ENCODE measurements at regions of chr11 and their contacts with region 1.

Region 1: DNA sequence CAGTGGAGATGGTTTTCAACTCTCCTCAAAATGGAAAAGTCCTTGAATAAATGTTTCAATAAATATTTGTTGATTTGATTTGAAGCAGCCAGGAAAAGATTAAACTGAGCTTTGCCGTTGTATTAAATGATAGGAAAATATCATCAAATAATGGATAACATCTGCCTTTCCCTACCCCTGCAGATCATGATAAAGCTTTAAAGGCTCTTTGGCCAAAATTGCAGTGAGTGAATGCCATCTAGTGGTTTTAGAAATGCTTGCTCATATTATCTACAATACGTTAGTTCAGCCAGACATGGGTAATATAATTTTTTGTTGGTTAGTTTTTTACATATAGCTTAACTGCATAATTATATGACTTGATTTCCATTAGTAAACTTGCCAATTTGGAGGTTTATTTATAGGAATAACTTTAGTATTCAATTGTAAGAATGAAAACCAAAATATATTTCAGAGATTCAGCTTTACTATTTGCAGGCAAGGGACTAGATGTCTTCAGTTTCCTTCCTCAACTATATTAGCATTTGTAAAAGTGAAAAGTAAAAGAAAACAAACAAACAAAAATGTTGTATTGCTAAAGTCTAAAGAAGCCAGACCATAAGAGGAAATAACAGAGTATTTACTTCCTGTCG is 159.2 kb downstream of the MSANTD4 start:
- DNase-seq: peak; percentile 83
- ATAC-seq: peak; percentile 82
- H3K4me3 ChIP-seq: no peak overlapping the region
- H3K27ac ChIP-seq: no peak overlapping the region
- H3K4me1 ChIP-seq: no peaks in the 10 kb centered on the region
- H3K27me3 ChIP-seq: no peaks in the 10 kb centered on the region
- CTCF ChIP-seq: peak; percentile 93

Region 2: GRCh38 chr11:104164028-104164520 is 1698.8 kb before region 1 on chr11 and contains the start of gene PDGFD:
- CTCF ChIA-PET with region 1: no interaction called
- POLR2A ChIA-PET with region 1: no interaction called
- intact Hi-C with region 1: loop called (anchors 10 kb)
- DNase-seq: peak; percentile 67
- ATAC-seq: peak; percentile 90
- H3K4me3 ChIP-seq: peak within 1 kb of the TSS; percentile 65
- H3K27ac ChIP-seq: no peak within 1 kb of the TSS
- H3K4me1 ChIP-seq: no peaks in the 10 kb centered on the region
- H3K27me3 ChIP-seq: no peaks in the 10 kb centered on the region
- CTCF ChIP-seq: peak; percentile 46
- total RNA-seq, gene PDGFD: 3.7 and 5.0 TPM in 2 replicates

Region 3: GRCh38 chr11:104609311-104610085 is 1253.4 kb before region 1 on chr11:
- CTCF ChIA-PET with region 1: no interaction called
- POLR2A ChIA-PET with region 1: no interaction called
- intact Hi-C with region 1: loop called (anchors 2 kb)
- DNase-seq: peak; percentile 75
- ATAC-seq: peak; percentile 98
- H3K4me3 ChIP-seq: no peak overlapping the region
- H3K27ac ChIP-seq: no peak overlapping the region
- H3K4me1 ChIP-seq: no peaks in the 10 kb centered on the region
- H3K27me3 ChIP-seq: no peaks in the 10 kb centered on the region
- CTCF ChIP-seq: peak; percentile 93

Region 4: DNA sequence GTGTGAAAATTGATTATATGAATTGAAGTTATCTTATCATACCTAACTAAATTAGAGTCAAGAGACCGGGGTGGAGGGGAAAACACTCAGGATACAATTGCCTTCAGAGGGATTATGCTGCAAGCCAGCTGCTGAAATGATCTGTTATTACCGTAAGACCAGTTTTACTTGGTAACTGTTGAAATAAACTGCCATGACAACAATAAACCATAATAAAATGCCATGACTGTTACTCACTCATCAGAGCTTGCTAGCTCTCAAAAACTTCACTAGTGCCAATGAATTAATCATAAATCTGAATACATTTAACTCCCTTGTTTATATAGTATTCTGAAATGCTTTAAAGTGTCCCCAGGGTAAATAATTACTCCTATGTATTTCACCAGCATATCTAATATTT is 1032.8 kb before region 1 on chr11:
- CTCF ChIA-PET with region 1: no interaction called
- POLR2A ChIA-PET with region 1: no interaction called
- intact Hi-C with region 1: loop called (anchors 10 kb)
- DNase-seq: peak; percentile 85
- ATAC-seq: peak; percentile 96
- H3K4me3 ChIP-seq: no peak overlapping the region
- H3K27ac ChIP-seq: no peak overlapping the region
- H3K4me1 ChIP-seq: peaks cover 9% of the 10 kb centered on the region
- H3K27me3 ChIP-seq: no peaks in the 10 kb centered on the region
- CTCF ChIP-seq: no peak

Region 5: DNA sequence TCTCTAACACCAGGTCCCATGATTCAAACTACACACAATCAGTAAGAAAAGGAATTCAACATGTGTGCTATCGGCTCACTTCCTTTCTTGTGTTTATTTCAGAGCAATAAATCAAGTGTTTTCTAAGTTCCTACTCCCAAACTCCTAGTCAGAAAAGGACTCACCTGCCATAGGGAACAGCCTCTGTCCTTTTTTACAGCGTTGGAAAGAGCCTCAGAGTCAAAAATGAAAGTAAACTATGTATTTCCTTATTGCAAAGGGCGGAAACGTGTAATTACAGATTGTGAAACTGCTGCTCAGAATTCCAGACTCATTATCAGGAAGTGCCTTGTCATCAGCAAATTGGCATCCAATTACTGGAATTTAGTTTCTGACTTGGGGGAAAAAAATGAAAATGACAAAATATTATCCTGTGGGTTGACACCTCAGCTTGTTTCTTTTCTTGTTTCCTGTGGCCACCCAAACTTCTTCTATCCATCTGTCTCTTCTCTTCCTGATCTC is 894.4 kb before region 1 on chr11 and contains the start of gene CASP4:
- CTCF ChIA-PET with region 1: no interaction called
- POLR2A ChIA-PET with region 1: no interaction called
- intact Hi-C with region 1: loop called (anchors 5 kb)
- DNase-seq: peak; percentile 81
- ATAC-seq: peak; percentile 79
- H3K4me3 ChIP-seq: peak within 1 kb of the TSS; percentile 74
- H3K27ac ChIP-seq: peak within 1 kb of the TSS; percentile 71
- H3K4me1 ChIP-seq: peaks cover 25% of the 10 kb centered on the region
- H3K27me3 ChIP-seq: no peaks in the 10 kb centered on the region
- CTCF ChIP-seq: no peak
- total RNA-seq, gene CASP4: 38.5 and 40.9 TPM in 2 replicates

Region 6: GRCh38 chr11:105044921-105045524 is 817.8 kb before region 1 on chr11 and contains the start of gene CARD16:
- CTCF ChIA-PET with region 1: no interaction called
- POLR2A ChIA-PET with region 1: no interaction called
- intact Hi-C with region 1: loop called (anchors 5 kb)
- DNase-seq: no peak
- ATAC-seq: no peak
- H3K4me3 ChIP-seq: no peak within 1 kb of the TSS
- H3K27ac ChIP-seq: no peak within 1 kb of the TSS
- H3K4me1 ChIP-seq: peaks cover 16% of the 10 kb centered on the region
- H3K27me3 ChIP-seq: no peaks in the 10 kb centered on the region
- CTCF ChIP-seq: no peak
- total RNA-seq, gene CARD16: not detected in 2 replicates

Region 7: GRCh38 chr11:105577641-105578040 is 285.2 kb before region 1 on chr11:
- CTCF ChIA-PET with region 1: no interaction called
- POLR2A ChIA-PET with region 1: no interaction called
- intact Hi-C with region 1: no loop called
- DNase-seq: peak; percentile 90
- ATAC-seq: peak; percentile 97
- H3K4me3 ChIP-seq: no peak overlapping the region
- H3K27ac ChIP-seq: 0 out of 2 replicates have a peak overlapping the region, but pooled peaks have one; percentile 11
- H3K4me1 ChIP-seq: peaks cover 27% of the 10 kb centered on the region
- H3K27me3 ChIP-seq: no peaks in the 10 kb centered on the region
- CTCF ChIP-seq: peak; percentile 57

Region 8: GRCh38 chr11:105609341-105609781 is 253.5 kb before region 1 on chr11:
- CTCF ChIA-PET with region 1: no interaction called
- POLR2A ChIA-PET with region 1: no interaction called
- intact Hi-C with region 1: loop called (anchors 1 kb)
- DNase-seq: peak; percentile 62
- ATAC-seq: peak; percentile 84
- H3K4me3 ChIP-seq: peak overlapping the region; percentile 16; the same call in 1 of the 2 replicates
- H3K27ac ChIP-seq: no peak overlapping the region
- H3K4me1 ChIP-seq: 0 out of 2 replicates have a peak, but pooled peaks cover 3% of the 10 kb centered on the region
- H3K27me3 ChIP-seq: peaks cover 37% of the 10 kb centered on the region
- CTCF ChIP-seq: peak; percentile 81

Region 9: GRCh38 chr11:105821372-105821771 is 41.5 kb before region 1 on chr11:
- CTCF ChIA-PET with region 1: no interaction called
- POLR2A ChIA-PET with region 1: no interaction called
- intact Hi-C with region 1: no loop called
- DNase-seq: no peak
- ATAC-seq: no peak
- H3K4me3 ChIP-seq: no peak overlapping the region
- H3K27ac ChIP-seq: no peak overlapping the region
- H3K4me1 ChIP-seq: no peaks in the 10 kb centered on the region
- H3K27me3 ChIP-seq: no peaks in the 10 kb centered on the region
- CTCF ChIP-seq: no peak

Region 10: GRCh38 chr11:105881027-105881426 is 18.2 kb after region 1 on chr11:
- CTCF ChIA-PET with region 1: no interaction called
- POLR2A ChIA-PET with region 1: no interaction called
- intact Hi-C with region 1: no loop called
- DNase-seq: no peak
- ATAC-seq: no peak
- H3K4me3 ChIP-seq: no peak overlapping the region
- H3K27ac ChIP-seq: no peak overlapping the region
- H3K4me1 ChIP-seq: no peaks in the 10 kb centered on the region
- H3K27me3 ChIP-seq: no peaks in the 10 kb centered on the region
- CTCF ChIP-seq: no peak

Region 11: GRCh38 chr11:106724293-106724892 is 861.5 kb after region 1 on chr11:
- CTCF ChIA-PET with region 1: no interaction called
- POLR2A ChIA-PET with region 1: no interaction called
- intact Hi-C with region 1: no loop called
- DNase-seq: no peak
- ATAC-seq: no peak
- H3K4me3 ChIP-seq: no peak overlapping the region
- H3K27ac ChIP-seq: no peak overlapping the region
- H3K4me1 ChIP-seq: no peaks in the 10 kb centered on the region
- H3K27me3 ChIP-seq: no peaks in the 10 kb centered on the region
- CTCF ChIP-seq: no peak